Ascending aorta (tissue), 2 donors: ENCODE measurements at regions of chr1 and their contacts with region 1.

Region 1: GRCh38 chr1:904310-904950 is 19.3 kb upstream of the SAMD11 start:
- DNase-seq: peak; percentile 8 to 89
- H3K4me3 ChIP-seq: peak overlapping the region; percentile 45 to 68
- H3K27ac ChIP-seq: peak overlapping the region in 1 of 2 donors; percentile 26
- H3K4me1 ChIP-seq: no peaks in the 10 kb centered on the region
- H3K27me3 ChIP-seq: no peaks in the 10 kb centered on the region
- CTCF ChIP-seq: peak; percentile 70 to 94 (median 88)

Region 2: DNA sequence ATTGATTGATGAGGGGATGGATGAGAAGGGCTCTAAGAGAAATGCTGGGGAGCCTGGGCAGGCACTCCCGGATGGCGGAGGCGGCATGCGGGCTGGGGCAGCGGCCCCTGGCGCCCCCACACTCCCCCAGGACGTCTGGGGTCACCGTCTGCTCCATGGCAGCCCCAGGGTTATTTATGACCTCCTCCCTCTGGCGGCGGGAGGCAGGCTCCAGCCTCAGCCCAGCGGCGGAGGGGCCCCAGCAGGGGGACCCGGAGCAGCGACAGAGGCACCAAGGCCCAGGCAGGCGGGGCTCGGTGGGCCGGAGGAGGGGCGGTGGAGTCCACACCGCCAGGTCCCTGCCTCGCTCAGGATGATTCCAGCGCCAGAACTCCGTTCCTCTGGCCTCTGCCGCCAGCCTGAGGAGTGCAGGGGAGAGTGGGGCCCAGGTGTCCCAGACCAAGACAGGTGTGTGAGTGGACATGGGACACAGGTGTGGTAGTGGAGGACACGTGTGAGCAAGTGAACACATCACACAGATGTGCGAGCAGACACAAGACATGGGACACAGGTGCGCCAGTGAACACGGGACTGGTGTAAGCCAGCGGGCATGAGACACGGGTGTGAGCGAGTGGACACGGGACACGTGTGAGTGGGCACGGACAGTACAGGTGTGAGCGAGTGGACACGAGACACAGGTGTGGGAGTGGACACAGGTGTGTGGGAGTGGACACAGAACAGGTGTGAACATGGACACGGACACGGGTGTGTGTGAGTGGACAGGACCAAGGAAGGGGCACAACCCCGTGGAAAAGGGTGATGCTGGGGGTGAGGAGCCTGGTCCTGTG is 16.8 kb after region 1 on chr1:
- intact Hi-C with region 1: loop called (anchors 1 kb)
- DNase-seq: peak in 1 of 2 donors; percentile 79
- H3K4me3 ChIP-seq: peak overlapping the region in 1 of 2 donors; percentile 28
- H3K27ac ChIP-seq: no peak overlapping the region
- H3K4me1 ChIP-seq: peaks cover 22 to 32% of the 10 kb centered on the region in 2 donors
- H3K27me3 ChIP-seq: peaks cover 2% of the 10 kb centered on the region
- CTCF ChIP-seq: peak; percentile 45 to 67 (median 61)

Region 3: GRCh38 chr1:941588-942383 is 37.4 kb after region 1 on chr1:
- intact Hi-C with region 1: loop called (anchors 2 kb)
- DNase-seq: peak in 1 of 2 donors; percentile 85
- H3K4me3 ChIP-seq: peak overlapping the region; percentile 50 to 62
- H3K27ac ChIP-seq: peak overlapping the region; percentile 56 to 70
- H3K4me1 ChIP-seq: peaks cover 13 to 21% of the 10 kb centered on the region in 2 donors
- H3K27me3 ChIP-seq: peaks cover 12% of the 10 kb centered on the region
- CTCF ChIP-seq: no peak

Region 4: GRCh38 chr1:1019122-1019999 is 114.9 kb after region 1 on chr1:
- intact Hi-C with region 1: loop called (anchors 1 kb)
- DNase-seq: peak in 1 of 2 donors; percentile 87
- H3K4me3 ChIP-seq: peak overlapping the region; percentile 93 to 95
- H3K27ac ChIP-seq: peak overlapping the region; percentile 87 to 93
- H3K4me1 ChIP-seq: peaks cover 10% of the 10 kb centered on the region in 2 donors
- H3K27me3 ChIP-seq: no peaks in the 10 kb centered on the region
- CTCF ChIP-seq: peak; percentile 28 to 54 (median 48)